Activated T-helper 1 cell treated with anti-CD3 and anti-CD28 coated beads, Interleukin-12 subunit alpha, Interleukin-12 subunit beta, Interleukin-2, Interleukin-4 antibody, amounts not matched to agents 30 ng/mL and 10 ng/mL and 1 ng/mL, durations not matched to agents 14 hours and 24 hours and 36 hours (primary cell): ENCODE measurements at regions of chr6 and their contacts with region 1.

Region 1: GRCh38 chr6:12637960-12638641 is 78.5 kb upstream of the PHACTR1 start:
- DNase-seq: no peak
- H3K4me3 Mint-ChIP-seq: no peak overlapping the region
- H3K27ac Mint-ChIP-seq: no peak overlapping the region
- H3K4me1 Mint-ChIP-seq: peaks cover 7% of the 10 kb centered on the region
- H3K27me3 Mint-ChIP-seq: peaks cover 7% of the 10 kb centered on the region

Region 2: GRCh38 chr6:12656906-12657305 is 18.8 kb after region 1 on chr6:
- intact Hi-C with region 1: no loop called
- DNase-seq: no peak
- H3K4me3 Mint-ChIP-seq: no peak overlapping the region
- H3K27ac Mint-ChIP-seq: no peak overlapping the region
- H3K4me1 Mint-ChIP-seq: peaks cover 7% of the 10 kb centered on the region
- H3K27me3 Mint-ChIP-seq: peaks cover 1% of the 10 kb centered on the region

Region 3: GRCh38 chr6:12844290-12845223 is 206.5 kb after region 1 on chr6:
- intact Hi-C with region 1: loop called (anchors 1 kb)
- DNase-seq: no peak
- H3K4me3 Mint-ChIP-seq: no peak overlapping the region
- H3K27ac Mint-ChIP-seq: no peak overlapping the region
- H3K4me1 Mint-ChIP-seq: no peaks in the 10 kb centered on the region
- H3K27me3 Mint-ChIP-seq: no peaks in the 10 kb centered on the region

Region 4: GRCh38 chr6:12890171-12890790 is 252.2 kb after region 1 on chr6:
- intact Hi-C with region 1: loop called (anchors 1 kb)
- DNase-seq: no peak
- H3K4me3 Mint-ChIP-seq: no peak overlapping the region
- H3K27ac Mint-ChIP-seq: no peak overlapping the region
- H3K4me1 Mint-ChIP-seq: no peaks in the 10 kb centered on the region
- H3K27me3 Mint-ChIP-seq: peaks cover 19% of the 10 kb centered on the region